ENCODE measurements at regions of chr1 and their contacts with region 1.

Region 1: DNA sequence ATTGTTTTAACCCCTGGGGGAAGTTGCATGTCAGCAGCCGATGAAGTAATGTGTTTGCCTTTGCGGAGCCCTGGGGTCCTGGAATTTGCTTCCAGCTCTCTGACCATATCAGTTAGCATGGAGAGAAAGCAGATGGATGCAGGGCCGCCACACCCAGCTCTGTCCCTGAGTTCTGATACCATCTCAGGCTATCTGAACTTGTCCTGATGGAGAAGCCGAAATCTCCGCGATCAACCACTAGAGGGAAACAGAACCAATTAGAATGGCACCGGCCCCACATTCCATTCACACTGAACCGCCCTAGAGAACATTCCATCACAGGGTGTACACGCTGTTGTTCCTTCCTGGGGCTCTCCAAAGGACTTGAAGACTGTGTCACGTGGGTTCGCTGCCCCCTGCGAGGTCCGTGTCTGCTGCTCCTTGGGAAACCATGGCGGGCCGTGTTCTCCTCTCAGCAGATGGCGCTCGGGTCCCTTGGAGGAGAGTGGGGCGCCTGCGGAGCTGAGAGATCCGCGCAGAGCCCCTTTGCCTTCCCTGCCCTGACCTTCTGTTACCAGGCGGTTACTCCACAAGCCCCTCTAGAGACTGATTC is 75.4 kb downstream of the ABCA4 start:
- DNase-seq: peak; percentile 55 to 82 (median 70)
- ATAC-seq: peak; percentile 88
- H3K4me3 ChIP-seq: no peak overlapping the region
- H3K4me1 ChIP-seq: no peaks in the 10 kb centered on the region
- CTCF ChIP-seq: peak; percentile 24

Region 2: GRCh38 chr1:94329986-94330385 is 284.4 kb after region 1 on chr1:
- intact Hi-C with region 1: loop called in 1 of 2 experiments (anchors 5 kb)
- DNase-seq: no peak
- ATAC-seq: no peak
- H3K4me3 ChIP-seq: no peak overlapping the region
- H3K4me1 ChIP-seq: no peaks in the 10 kb centered on the region
- CTCF ChIP-seq: no peak